ENCODE measurements at regions of chr12 and their contacts with region 1.

Region 1: DNA sequence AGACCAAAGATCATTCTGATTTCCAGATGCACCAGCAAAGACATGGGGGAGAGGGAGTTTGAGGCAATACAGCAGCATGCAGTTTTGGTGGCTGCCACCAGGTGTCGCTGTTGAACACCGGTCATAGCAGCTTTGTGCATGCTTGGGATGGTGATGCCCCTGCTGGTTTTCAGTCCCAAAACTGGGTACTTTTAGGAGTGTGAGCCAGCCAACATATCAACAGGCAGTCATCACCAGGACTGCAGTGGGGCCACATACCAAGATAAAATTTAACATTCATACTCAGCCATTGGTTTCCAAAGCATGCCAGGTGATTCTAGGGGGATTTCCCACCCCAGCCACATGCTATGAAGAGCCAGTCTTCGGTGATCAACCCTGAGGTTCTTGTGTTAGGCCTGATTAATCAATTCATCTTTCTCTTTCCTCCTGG is 64.2 kb downstream of the PHETA1 start:
- DNase-seq: no peak
- ATAC-seq: no peak
- H3K4me3 ChIP-seq: no peak overlapping the region
- H3K27ac ChIP-seq: no peak overlapping the region
- H3K4me1 ChIP-seq: no peaks in the 10 kb centered on the region
- H3K27me3 ChIP-seq: no peaks in the 10 kb centered on the region
- CTCF ChIP-seq: peak in 3 of 4 donors; percentile 8 to 32 (median 18)

Region 2: DNA sequence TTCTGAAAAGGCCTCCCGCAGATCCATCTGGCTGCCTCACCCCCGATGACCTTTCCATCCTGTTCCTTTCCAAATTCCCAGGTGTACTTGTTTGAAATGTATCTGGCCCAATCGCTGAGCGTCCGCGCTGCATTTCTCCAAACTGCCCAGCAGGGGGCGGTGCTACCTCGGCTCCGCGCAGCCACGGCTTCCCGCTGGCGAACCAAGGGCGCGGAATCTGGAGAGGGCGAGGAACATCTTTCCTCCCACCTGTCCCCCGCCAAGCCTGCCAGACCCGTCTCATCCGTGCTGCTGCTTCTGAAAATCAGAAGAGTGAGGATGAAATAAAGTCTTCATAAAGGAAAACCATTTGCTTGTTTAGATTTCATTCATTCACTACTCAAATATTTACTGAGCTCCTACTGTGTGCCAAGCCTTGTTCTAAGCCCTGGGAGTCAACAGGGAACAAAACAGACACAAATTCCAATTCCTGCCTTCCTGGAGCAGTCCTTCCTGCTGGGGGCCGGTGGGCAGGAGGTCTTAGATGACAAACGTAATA is 367.5 kb before region 1 on chr12:
- intact Hi-C with region 1: loop called in 1 of 3 experiments (anchors 10 kb)
- DNase-seq: peak; percentile 19 to 86 (median 54)
- ATAC-seq: peak; percentile 61 to 92 (median 84)
- H3K4me3 ChIP-seq: no peak overlapping the region
- H3K27ac ChIP-seq: no peak overlapping the region
- H3K4me1 ChIP-seq: peaks cover 0 to 3% (median 0%) of the 10 kb centered on the region in 3 donors
- H3K27me3 ChIP-seq: no peaks in the 10 kb centered on the region
- CTCF ChIP-seq: peak; percentile 85 to 93 (median 89)

Region 3: GRCh38 chr12:111024205-111024801 is 280.4 kb before region 1 on chr12:
- intact Hi-C with region 1: loop called in 2 of 3 experiments (anchors 5 to 10 kb)
- DNase-seq: peak; percentile 26 to 83 (median 52)
- ATAC-seq: peak in 3 of 4 donors; percentile 82 to 96 (median 87)
- H3K4me3 ChIP-seq: no peak overlapping the region
- H3K27ac ChIP-seq: no peak overlapping the region
- H3K4me1 ChIP-seq: no peaks in the 10 kb centered on the region
- H3K27me3 ChIP-seq: no peaks in the 10 kb centered on the region
- CTCF ChIP-seq: peak; percentile 63 to 73 (median 65)

Measured in pancreas (tissue), 10 donors.